Aorta (tissue), 5 donors: ENCODE measurements at regions of chr6 and their contacts with region 1.

Region 1: GRCh38 chr6:139990856-139991465 is 616.5 kb upstream of the CITED2 start:
- DNase-seq: no peak
- ATAC-seq: peak; percentile 65
- H3K4me3 ChIP-seq: no peak overlapping the region
- H3K27ac ChIP-seq: peak overlapping the region; percentile 7 to 25
- H3K4me1 ChIP-seq: peaks cover 0 to 3% of the 10 kb centered on the region in 2 donors
- H3K27me3 ChIP-seq: no peaks in the 10 kb centered on the region

Region 2: DNA sequence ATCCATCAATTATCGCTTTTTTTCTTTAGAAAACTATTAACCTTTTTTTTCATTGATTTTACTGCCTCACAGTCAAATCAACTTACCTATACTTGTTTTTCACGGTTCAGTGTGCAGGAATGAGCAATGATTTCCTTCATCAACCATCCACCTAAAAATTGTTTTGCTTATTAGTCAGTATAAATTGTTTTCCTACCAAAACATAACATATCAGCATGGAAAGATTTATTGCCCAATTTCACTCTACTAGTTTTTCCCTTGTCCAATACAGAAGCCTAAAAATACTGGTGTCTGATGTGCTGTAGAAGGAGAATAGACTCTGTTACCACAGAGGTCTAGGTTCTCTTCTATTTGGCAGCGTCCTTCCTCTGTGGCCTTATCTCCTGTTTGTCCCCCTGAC is 58.3 kb before region 1 on chr6:
- intact Hi-C with region 1: no loop called
- DNase-seq: no peak
- ATAC-seq: no peak
- H3K4me3 ChIP-seq: no peak overlapping the region
- H3K27ac ChIP-seq: no peak overlapping the region
- H3K4me1 ChIP-seq: no peaks in the 10 kb centered on the region
- H3K27me3 ChIP-seq: no peaks in the 10 kb centered on the region

Region 3: DNA sequence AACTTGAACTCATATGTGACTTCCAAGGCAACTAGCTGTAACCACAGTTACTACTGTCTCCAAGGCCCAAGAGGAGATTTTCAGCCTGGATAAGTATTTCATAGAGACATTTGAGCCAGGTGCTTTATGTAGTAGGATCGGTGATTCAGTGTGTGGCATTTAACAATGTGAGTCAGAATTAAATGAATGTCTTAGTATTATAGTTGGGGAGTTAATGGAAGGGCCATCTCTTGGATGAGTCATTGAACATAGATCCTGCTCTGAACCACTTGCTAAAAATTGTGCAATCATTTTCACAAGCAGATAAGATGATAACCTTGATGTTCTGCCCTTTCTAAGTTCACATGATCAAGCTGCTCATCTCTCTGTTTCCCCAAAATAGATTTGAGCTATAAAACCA is 52.4 kb after region 1 on chr6:
- intact Hi-C with region 1: no loop called
- DNase-seq: no peak
- ATAC-seq: no peak
- H3K4me3 ChIP-seq: no peak overlapping the region
- H3K27ac ChIP-seq: no peak overlapping the region
- H3K4me1 ChIP-seq: no peaks in the 10 kb centered on the region
- H3K27me3 ChIP-seq: no peaks in the 10 kb centered on the region

Region 4: DNA sequence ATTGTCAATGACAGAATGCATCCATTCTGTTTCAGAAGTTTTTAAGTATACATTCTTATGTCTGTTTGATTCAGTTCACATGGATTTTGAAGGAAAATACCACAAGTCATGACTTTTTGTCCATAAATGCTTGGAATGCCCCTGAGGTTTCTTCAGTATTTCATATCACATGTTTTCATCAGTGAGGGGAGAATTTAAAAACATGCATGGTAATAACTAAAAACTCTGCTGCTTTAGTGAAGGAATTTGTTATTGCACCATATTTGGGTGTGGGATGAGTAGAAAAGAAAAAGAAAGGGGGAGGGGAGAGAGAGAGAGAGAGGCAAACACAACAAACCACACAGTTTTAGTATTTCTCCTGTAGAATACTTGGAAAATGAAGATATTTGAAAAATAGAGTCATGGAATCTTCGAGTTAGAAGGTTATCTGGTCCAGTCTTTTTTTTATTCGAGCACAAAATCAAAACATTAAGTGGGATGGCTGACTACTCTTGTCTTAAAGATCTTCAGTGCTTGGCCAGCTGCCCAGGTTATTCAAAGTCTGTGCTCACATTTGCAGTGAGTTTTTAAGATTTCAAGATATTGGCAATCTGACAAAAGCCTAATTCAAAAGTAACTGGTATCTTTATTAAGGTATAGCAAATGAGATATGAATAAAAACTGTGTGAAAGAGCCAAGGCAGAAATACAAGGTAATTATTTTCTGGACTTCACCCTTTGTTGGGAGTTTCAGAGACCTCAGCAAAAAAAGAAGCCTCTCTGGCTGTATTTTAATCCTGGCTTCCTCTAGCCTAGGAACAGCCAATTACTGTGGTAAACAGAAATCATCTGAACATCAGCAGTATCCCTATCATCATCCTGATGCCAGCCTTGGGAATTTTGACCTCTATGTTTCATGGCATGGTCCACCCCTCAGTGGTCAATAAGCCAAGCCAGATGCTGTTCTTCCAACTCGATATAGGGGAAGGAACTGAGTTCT is 71.4 kb after region 1 on chr6:
- intact Hi-C with region 1: loop called in 1 of 2 experiments (anchors 5 kb)
- DNase-seq: peak; percentile 58 to 68
- ATAC-seq: peak; percentile 67
- H3K4me3 ChIP-seq: no peak overlapping the region
- H3K27ac ChIP-seq: no peak overlapping the region
- H3K4me1 ChIP-seq: peaks cover 4% of the 10 kb centered on the region in 2 donors
- H3K27me3 ChIP-seq: no peaks in the 10 kb centered on the region

Region 5: GRCh38 chr6:140311146-140311545 is 320.2 kb after region 1 on chr6:
- intact Hi-C with region 1: no loop called
- DNase-seq: no peak
- ATAC-seq: no peak
- H3K4me3 ChIP-seq: no peak overlapping the region
- H3K27ac ChIP-seq: no peak overlapping the region
- H3K4me1 ChIP-seq: no peaks in the 10 kb centered on the region
- H3K27me3 ChIP-seq: no peaks in the 10 kb centered on the region